Heart right ventricle (tissue), 16 donors: ENCODE measurements at regions of chr5 and their contacts with region 1.

Region 1: GRCh38 chr5:96336351-96336985 is 96.6 kb downstream of the PCSK1 start:
- DNase-seq: peak in 1 of 2 donors; percentile 78
- ATAC-seq: peak; percentile 61 to 92 (median 80)
- H3K4me3 ChIP-seq: peak overlapping the region in 2 of 10 donors; percentile 8 to 10
- H3K27ac ChIP-seq: peak overlapping the region in 8 of 10 donors; percentile 33 to 68 (median 50)
- H3K4me1 ChIP-seq: peaks cover 0 to 56% (median 15%) of the 10 kb centered on the region in 9 donors
- H3K27me3 ChIP-seq: no peaks in the 10 kb centered on the region
- CTCF ChIP-seq: peak; percentile 62 to 93 (median 88)

Region 2: DNA sequence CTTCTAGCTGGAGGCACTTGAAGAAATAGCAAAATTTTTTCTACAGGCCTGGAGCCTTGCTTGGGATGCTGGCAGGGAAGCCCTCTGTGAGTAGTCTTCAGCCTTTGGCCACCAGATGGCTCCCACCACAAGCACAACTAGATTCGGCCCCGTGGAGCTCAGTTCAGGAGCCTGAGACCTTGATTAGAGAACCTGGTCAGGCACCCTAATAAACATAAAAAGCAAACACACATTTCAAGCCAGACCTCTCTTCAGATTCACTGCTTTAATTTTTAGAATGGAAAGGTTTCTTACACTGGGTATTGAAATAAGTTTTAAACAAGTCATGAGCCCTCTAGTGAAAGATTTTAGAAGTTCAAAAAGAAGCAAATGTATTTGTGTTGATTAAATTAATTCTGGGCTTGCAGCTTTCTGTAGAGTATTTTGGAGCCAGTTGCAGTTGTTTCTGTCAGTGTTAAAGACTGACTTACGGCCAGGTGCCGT is 555.3 kb before region 1 on chr5:
- intact Hi-C with region 1: loop called in 4 of 10 experiments (anchors 5 to 10 kb)
- DNase-seq: peak; percentile 68 to 84
- ATAC-seq: peak; percentile 88 to 95 (median 92)
- H3K4me3 ChIP-seq: no peak overlapping the region
- H3K27ac ChIP-seq: peak overlapping the region in 8 of 10 donors; percentile 5 to 77 (median 46)
- H3K4me1 ChIP-seq: peaks cover 0 to 52% (median 30%) of the 10 kb centered on the region in 9 donors
- H3K27me3 ChIP-seq: no peaks in the 10 kb centered on the region
- CTCF ChIP-seq: peak in 8 of 9 donors; percentile 70 to 96 (median 91)

Region 3: GRCh38 chr5:96079075-96079474 is 257.4 kb before region 1 on chr5:
- intact Hi-C with region 1: loop called in 1 of 10 experiments (anchors 10 kb)
- DNase-seq: no peak
- ATAC-seq: peak in 5 of 8 donors; percentile 33 to 93 (median 71)
- H3K4me3 ChIP-seq: no peak overlapping the region
- H3K27ac ChIP-seq: peak overlapping the region in 1 of 10 donors; percentile 20
- H3K4me1 ChIP-seq: peaks cover 0 to 34% (median 0%) of the 10 kb centered on the region in 9 donors
- H3K27me3 ChIP-seq: no peaks in the 10 kb centered on the region
- CTCF ChIP-seq: no peak

Region 4: GRCh38 chr5:96125231-96125891 is 211.1 kb before region 1 on chr5:
- intact Hi-C with region 1: loop called in 1 of 10 experiments (anchors 10 kb)
- DNase-seq: peak in 1 of 2 donors; percentile 9
- ATAC-seq: peak; percentile 33 to 93 (median 80)
- H3K4me3 ChIP-seq: peak overlapping the region in 6 of 10 donors; percentile 4 to 28 (median 19)
- H3K27ac ChIP-seq: peak overlapping the region in 5 of 10 donors; percentile 9 to 61 (median 14)
- H3K4me1 ChIP-seq: peaks cover 0 to 29% (median 8%) of the 10 kb centered on the region in 9 donors
- H3K27me3 ChIP-seq: no peaks in the 10 kb centered on the region
- CTCF ChIP-seq: no peak

Region 5: GRCh38 chr5:96247097-96247701 is 89.3 kb before region 1 on chr5:
- intact Hi-C with region 1: loop called in 4 of 10 experiments (anchors 5 to 10 kb)
- DNase-seq: peak in 1 of 2 donors; percentile 52
- ATAC-seq: peak; percentile 67 to 97 (median 92)
- H3K4me3 ChIP-seq: peak overlapping the region in 3 of 10 donors; percentile 2 to 10 (median 5)
- H3K27ac ChIP-seq: peak overlapping the region; percentile 54 to 86 (median 74)
- H3K4me1 ChIP-seq: peaks cover 0 to 48% (median 17%) of the 10 kb centered on the region in 9 donors
- H3K27me3 ChIP-seq: no peaks in the 10 kb centered on the region
- CTCF ChIP-seq: no peak